K562 (cell line): ENCODE measurements at regions of chr2 and their contacts with region 1.

Region 1: DNA sequence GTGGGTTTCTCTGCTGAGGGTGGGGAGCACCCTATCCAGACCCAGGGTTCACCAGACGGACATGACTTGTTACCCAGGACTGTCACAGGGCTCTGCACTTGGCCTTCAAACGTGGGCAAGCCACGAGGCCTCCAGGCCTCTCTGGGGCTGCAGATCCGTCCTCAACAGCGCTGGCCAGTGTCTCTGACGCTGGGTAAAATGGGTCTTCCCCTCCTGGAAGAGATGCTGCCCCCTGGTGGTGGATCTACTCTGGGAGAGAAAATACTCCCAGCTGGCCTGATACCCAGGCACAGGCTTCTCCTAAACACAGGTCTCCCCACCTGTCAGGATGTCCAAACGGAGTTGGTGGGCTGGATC is 3.7 kb downstream of the GPR17 start:
- DNase-seq: peak; percentile 76 to 88 (median 78)
- ATAC-seq: peak; percentile 87
- H3K4me3 ChIP-seq: no peak overlapping the region
- H3K27ac ChIP-seq: no peak overlapping the region
- H3K4me1 ChIP-seq: peaks cover 0 to 44% of the 10 kb centered on the region in 2 experiments; a peak in 2 of 5 replicates
- H3K27me3 ChIP-seq: peaks cover 55 to 85% of the 10 kb centered on the region in 2 experiments
- CTCF ChIP-seq: peak; percentile 84 to 89 (median 89)
- EP300 ChIP-seq: no peak
- POLR2A ChIP-seq: no peak
- RAD21 ChIP-seq: peak; percentile 57 to 86

Region 2: GRCh38 chr2:127591221-127591923 is 58.3 kb before region 1 on chr2:
- CTCF ChIA-PET with region 1: interaction called, 8 read pairs
- POLR2A ChIA-PET with region 1: interaction called, 3 read pairs
- in situ Hi-C with region 1: no loop called
- intact Hi-C with region 1: loop called (anchors 1 kb)
- DNase-seq: peak; percentile 73 to 84 (median 78)
- ATAC-seq: peak; percentile 98
- H3K4me3 ChIP-seq: no peak overlapping the region
- H3K27ac ChIP-seq: no peak overlapping the region
- H3K4me1 ChIP-seq: peaks cover 0 to 9% of the 10 kb centered on the region in 2 experiments; a peak in 1 of 5 replicates
- H3K27me3 ChIP-seq: peaks cover 5 to 28% of the 10 kb centered on the region in 2 experiments; a peak in 4 of 5 replicates
- CTCF ChIP-seq: peak; percentile 96 to 97 (median 97)
- EP300 ChIP-seq: no peak
- POLR2A ChIP-seq: no peak
- RAD21 ChIP-seq: peak; percentile 75 to 94

Region 3: DNA sequence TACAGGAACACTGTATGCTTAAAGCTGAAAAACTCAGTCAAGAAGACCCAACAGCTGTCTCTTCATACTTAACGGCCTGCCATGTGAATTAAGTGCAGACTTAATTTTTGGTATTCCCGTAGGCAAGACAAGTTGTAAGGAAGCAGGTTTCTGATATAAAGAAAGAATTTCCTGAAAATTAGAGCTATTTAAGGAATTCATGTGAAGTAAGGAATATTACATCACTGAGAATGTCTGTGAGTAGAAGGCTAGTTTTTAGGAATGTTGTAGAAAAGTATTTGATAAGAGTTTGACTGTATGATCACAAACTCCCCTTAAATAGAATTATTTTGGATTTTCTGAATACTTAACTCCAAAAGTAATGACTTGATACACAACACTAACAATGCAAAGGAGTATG is 110.3 kb after region 1 on chr2:
- CTCF ChIA-PET with region 1: no interaction called
- POLR2A ChIA-PET with region 1: no interaction called
- in situ Hi-C with region 1: no loop called
- intact Hi-C with region 1: no loop called
- DNase-seq: no peak
- ATAC-seq: no peak
- H3K4me3 ChIP-seq: no peak overlapping the region
- H3K27ac ChIP-seq: no peak overlapping the region
- H3K4me1 ChIP-seq: no peaks in the 10 kb centered on the region
- H3K27me3 ChIP-seq: no peaks in the 10 kb centered on the region
- CTCF ChIP-seq: no peak
- EP300 ChIP-seq: no peak
- POLR2A ChIP-seq: no peak
- RAD21 ChIP-seq: no peak